H1 (cell line): ENCODE measurements at regions of chr17 and their contacts with region 1.

Region 1: DNA sequence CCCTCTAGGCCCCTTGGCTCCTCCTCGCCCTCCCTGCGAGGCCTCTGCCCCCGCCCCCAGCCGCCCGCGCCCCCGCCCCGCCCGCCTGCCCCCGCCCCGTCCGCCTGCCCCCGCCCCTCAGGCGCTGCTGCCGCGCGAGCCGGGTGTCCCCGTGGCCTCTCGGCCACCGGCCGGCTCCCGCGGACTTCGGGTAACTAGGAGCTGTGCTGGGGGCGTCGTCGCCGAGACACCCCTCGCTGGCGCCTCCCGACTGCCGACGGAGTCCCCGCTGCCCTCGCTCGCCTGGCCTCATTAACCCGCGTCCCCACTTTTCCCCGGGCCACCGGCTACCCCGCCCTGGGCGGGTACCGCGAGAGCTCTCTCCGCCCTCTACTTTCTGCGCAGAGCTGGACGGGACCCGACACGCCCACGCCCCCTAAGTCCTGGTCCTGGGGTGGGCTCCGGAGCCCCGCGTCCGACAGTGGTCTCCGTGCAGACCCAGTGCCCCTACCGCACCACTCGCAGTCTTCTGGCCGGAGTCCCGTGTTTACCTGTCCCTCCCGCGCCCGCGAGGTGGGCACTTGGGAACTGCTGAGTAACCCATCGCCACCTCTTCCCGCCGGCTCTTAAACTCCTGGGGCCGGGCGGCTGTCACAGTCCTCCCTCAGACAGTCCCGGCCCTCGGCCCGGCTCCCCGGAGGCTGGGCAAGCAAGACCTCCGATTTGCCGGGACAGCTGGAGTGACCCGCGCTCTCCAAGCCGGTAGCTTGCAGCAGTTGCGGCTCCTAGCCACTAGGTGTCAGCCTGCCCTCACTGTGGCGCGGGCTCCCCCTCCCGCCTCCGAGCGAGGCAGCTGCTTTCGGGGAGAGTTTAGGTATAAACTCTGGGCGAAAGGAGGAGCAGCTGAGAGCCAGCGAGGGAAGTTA is at the start of gene TLCD1:
- DNase-seq: peak; percentile 93 to 98
- H3K4me3 ChIP-seq: peak within 1 kb of the TSS; percentile 81 to 97 (median 89)
- H3K27ac ChIP-seq: peak within 1 kb of the TSS; percentile 89
- H3K4me1 ChIP-seq: peaks cover 0 to 12% (median 5%) of the 10 kb centered on the region in 4 experiments; a peak in 6 of 7 replicates
- H3K27me3 ChIP-seq: no peaks in the 10 kb centered on the region
- CTCF ChIP-seq: peak; percentile 98 to 99 (median 99)
- EP300 ChIP-seq: peak in 1 of 2 experiments; percentile 70; a peak in 1 of 3 replicates
- POLR2A ChIP-seq: no peak; a peak in 2 of 3 replicates
- RAD21 ChIP-seq: peak; percentile 98 to 99
- total RNA-seq, gene TLCD1: 40.7 and 45.3 TPM in 2 replicates

Region 2: GRCh38 chr17:28644985-28645939 is 81.2 kb before region 1 on chr17 and contains the start of gene BLTP2:
- CTCF ChIA-PET with region 1: interaction called, 4 read pairs
- POLR2A ChIA-PET with region 1: interaction called, 13 read pairs
- DNase-seq: peak; percentile 78 to 91
- H3K4me3 ChIP-seq: peak within 1 kb of the TSS; percentile 74 to 97 (median 88)
- H3K27ac ChIP-seq: peak within 1 kb of the TSS; percentile 50; the same call in 1 of the 2 replicates
- H3K4me1 ChIP-seq: 0 out of 7 replicates have a peak, but pooled peaks cover 0 to 2% (median under 1%) of the 10 kb centered on the region in 4 experiments
- H3K27me3 ChIP-seq: no peaks in the 10 kb centered on the region
- CTCF ChIP-seq: no peak
- EP300 ChIP-seq: no peak
- POLR2A ChIP-seq: peak in 1 of 2 experiments; percentile 69; a peak in 1 of 3 replicates
- RAD21 ChIP-seq: no peak
- total RNA-seq, gene BLTP2: 123 and 140 TPM in 2 replicates

Region 3: DNA sequence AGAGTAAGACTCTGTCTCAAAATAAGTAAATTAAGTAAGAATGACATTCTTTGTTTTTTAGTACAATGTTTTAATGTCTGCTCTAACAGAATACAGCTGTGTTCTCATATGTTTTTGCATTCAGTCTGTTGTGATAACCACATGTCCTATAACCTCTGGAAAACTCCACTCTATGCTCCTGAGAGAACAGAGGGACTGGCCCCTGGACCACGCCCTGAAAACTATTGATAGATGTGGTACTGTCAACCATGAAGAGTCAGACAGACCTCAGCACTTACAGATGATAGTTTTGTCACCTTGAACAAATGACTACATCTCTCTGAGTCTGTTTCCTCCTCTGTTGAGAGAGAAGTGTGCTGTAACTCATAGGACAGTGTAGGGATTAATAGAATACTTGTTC is 56.6 kb before region 1 on chr17:
- CTCF ChIA-PET with region 1: no interaction called
- POLR2A ChIA-PET with region 1: no interaction called
- DNase-seq: no peak
- H3K4me3 ChIP-seq: no peak overlapping the region
- H3K27ac ChIP-seq: no peak overlapping the region
- H3K4me1 ChIP-seq: no peaks in the 10 kb centered on the region
- H3K27me3 ChIP-seq: no peaks in the 10 kb centered on the region
- CTCF ChIP-seq: no peak
- EP300 ChIP-seq: no peak
- POLR2A ChIP-seq: no peak
- RAD21 ChIP-seq: no peak

Region 4: GRCh38 chr17:28710861-28711722 is 15.4 kb before region 1 on chr17:
- CTCF ChIA-PET with region 1: interaction called, 20 read pairs
- POLR2A ChIA-PET with region 1: interaction called, 258 read pairs
- DNase-seq: peak; percentile 83 to 96
- H3K4me3 ChIP-seq: peak overlapping the region; percentile 59 to 85 (median 82)
- H3K27ac ChIP-seq: peak overlapping the region; percentile 98
- H3K4me1 ChIP-seq: peaks cover 5 to 17% (median 9%) of the 10 kb centered on the region in 4 experiments; a peak in 6 of 7 replicates
- H3K27me3 ChIP-seq: no peaks in the 10 kb centered on the region
- CTCF ChIP-seq: no peak
- EP300 ChIP-seq: no peak
- POLR2A ChIP-seq: peak; percentile 96 to 99
- RAD21 ChIP-seq: no peak

Region 5: DNA sequence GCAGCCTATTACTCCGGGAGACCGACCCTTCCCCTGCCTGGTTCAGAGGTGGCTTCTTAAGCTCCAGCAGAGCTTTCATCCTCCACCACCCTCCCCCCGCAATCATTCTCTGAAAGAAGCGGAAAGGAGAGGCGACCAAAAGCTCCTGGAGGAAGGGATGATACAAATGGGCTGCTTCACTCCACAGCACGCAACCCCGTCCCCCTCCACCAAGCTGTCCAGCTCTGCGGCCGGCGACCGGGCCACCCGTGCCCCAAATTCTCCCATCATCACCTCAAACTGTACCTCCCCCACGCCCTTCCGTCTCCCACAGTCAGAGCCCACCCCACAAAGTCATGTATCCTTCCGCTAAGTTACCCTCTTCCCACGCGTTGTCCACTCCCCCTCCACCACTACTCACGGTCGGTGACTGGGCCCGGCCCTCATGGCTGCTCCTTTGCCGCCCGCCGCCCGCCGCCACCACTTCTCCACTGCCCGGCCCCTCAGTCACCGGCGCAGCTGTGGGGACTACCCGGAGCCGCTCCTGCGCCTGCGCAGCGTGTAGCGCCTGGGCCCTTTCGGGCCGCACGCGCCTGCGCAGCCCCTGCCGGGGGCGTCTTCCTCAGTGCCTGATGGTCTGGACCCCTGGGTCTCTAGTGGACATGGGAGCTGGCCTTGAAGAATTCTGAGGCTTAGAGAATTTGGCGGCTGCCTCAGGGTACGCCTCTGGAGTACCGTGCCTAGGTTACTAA is 116.0 kb after region 1 on chr17 and contains the start of gene FAM222B:
- CTCF ChIA-PET with region 1: interaction called, 5 read pairs
- POLR2A ChIA-PET with region 1: interaction called, 12 read pairs
- DNase-seq: peak; percentile 54 to 92
- H3K4me3 ChIP-seq: peak within 1 kb of the TSS; percentile 85 to 98 (median 92)
- H3K27ac ChIP-seq: peak within 1 kb of the TSS; percentile 18; the same call in 1 of the 2 replicates
- H3K4me1 ChIP-seq: peaks cover 0 to 1% (median 0%) of the 10 kb centered on the region in 4 experiments; a peak in 1 of 7 replicates
- H3K27me3 ChIP-seq: no peaks in the 10 kb centered on the region
- CTCF ChIP-seq: no peak; a peak in 1 of 4 replicates
- EP300 ChIP-seq: no peak
- POLR2A ChIP-seq: peak in 1 of 2 experiments; percentile 50; a peak in 1 of 3 replicates
- RAD21 ChIP-seq: 0 out of 4 replicates have a peak, but pooled peaks of 1 of the 2 experiments have one; percentile 7
- total RNA-seq, gene FAM222B: 81.7 and 86.6 TPM in 2 replicates

Region 6: DNA sequence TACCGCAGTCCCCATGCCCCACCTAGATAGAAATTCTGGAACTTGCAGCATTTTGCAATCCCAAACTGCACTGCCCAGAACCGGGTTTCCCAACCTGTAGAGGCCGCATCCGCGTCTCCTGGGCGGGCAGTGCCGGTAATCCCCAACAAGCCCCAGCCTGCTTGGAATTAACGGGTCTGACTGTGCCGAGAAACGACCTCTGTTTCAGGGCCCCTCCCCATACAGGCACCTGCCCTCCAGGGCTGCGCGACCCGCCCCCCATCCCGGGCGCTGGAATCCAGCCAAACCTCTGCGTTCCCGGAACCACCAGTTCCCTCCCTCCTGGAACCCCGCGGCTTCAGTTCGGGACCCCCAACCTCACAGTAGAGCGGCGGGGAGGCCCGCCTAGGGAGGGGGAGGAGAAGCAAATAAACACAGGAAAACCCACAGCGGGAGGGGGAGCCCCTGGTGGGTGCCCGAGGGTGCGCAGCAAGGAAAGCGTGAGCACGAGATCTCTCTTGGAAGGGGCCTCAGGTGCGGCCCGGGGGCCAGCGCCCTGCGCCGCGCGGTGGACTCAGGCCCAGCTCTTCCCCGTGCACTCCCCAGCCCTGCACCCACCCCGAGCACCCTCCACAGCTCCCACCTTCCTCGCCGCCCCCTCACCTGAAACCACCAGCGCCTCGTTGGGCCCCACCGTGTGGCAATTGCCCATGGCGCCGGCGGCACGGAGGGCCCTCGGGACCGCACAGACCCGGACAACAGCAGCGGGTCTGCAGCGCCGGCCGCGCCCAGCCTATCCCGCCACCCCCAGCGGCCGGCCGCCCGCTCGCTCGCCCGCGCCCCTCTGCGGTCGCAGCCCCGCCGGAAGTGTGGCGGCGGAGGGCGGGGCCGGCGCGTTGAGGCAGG is 170.6 kb after region 1 on chr17 and contains the start of gene FLOT2:
- CTCF ChIA-PET with region 1: interaction called, 45 read pairs
- POLR2A ChIA-PET with region 1: interaction called, 71 read pairs
- DNase-seq: peak; percentile 38 to 83
- H3K4me3 ChIP-seq: peak within 1 kb of the TSS; percentile 79 to 94 (median 89)
- H3K27ac ChIP-seq: peak within 1 kb of the TSS; percentile 68; the same call in 1 of the 2 replicates
- H3K4me1 ChIP-seq: peaks cover 2 to 18% (median 8%) of the 10 kb centered on the region in 4 experiments
- H3K27me3 ChIP-seq: no peaks in the 10 kb centered on the region
- CTCF ChIP-seq: peak in 2 of 3 experiments; percentile 14 to 33; a peak in 3 of 4 replicates
- EP300 ChIP-seq: no peak; a peak in 1 of 3 replicates
- POLR2A ChIP-seq: peak; percentile 56 to 75; a peak in 2 of 3 replicates
- RAD21 ChIP-seq: no peak
- total RNA-seq, gene FLOT2: 116 and 121 TPM in 2 replicates

Region 7: DNA sequence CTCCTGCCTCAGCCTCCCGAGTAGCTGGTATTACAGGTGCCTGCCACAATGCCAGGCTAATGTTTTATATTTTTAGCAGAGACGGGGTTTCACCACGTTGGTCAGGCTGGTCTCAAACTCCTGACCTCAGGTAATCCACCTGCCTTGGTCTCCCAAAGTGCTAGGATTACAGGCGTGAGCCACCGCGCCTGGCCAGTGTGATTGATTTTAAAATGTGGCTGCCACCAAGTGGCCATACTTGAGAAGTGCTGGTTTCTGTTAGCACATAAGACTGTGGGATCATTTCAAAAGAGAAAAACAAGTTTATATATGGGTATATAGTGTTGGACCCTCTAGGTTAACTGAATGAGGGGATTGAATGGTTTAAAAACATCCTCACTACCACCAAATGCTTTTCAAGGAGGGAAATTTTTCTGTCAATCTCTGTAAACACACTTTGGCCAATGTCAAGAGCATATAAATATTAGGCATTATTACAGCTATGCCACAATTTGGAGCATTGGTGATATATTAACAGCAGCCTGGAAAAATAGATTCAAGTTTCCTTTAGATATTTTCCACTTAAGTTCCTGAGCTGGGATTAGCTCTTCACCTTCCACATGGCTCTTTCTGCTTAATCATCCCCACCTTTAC is 189.9 kb after region 1 on chr17:
- CTCF ChIA-PET with region 1: interaction called, 25 read pairs
- POLR2A ChIA-PET with region 1: interaction called, 4 read pairs
- DNase-seq: no peak
- H3K4me3 ChIP-seq: no peak overlapping the region
- H3K27ac ChIP-seq: no peak overlapping the region
- H3K4me1 ChIP-seq: no peaks in the 10 kb centered on the region; a peak in 2 of 7 replicates
- H3K27me3 ChIP-seq: no peaks in the 10 kb centered on the region
- CTCF ChIP-seq: peak; percentile 30 to 61 (median 47)
- EP300 ChIP-seq: no peak
- POLR2A ChIP-seq: no peak
- RAD21 ChIP-seq: peak; percentile 33 to 51; a peak in 3 of 4 replicates